ENCODE measurements at regions of chr19 and their contacts with region 1.

Region 1: GRCh38 chr19:35044317-35045117 is 3.0 kb downstream of the HPN start:
- DNase-seq: peak; percentile 39 to 75 (median 65)
- ATAC-seq: peak; percentile 30
- H3K4me3 ChIP-seq: no peak overlapping the region
- H3K4me3 Mint-ChIP-seq: no peak overlapping the region
- H3K27ac ChIP-seq: no peak overlapping the region
- H3K27ac Mint-ChIP-seq: no peak overlapping the region
- H3K4me1 ChIP-seq: peaks cover 28% of the 10 kb centered on the region
- H3K4me1 Mint-ChIP-seq: peaks cover 33% of the 10 kb centered on the region
- H3K27me3 ChIP-seq: peaks cover 0 to 9% of the 10 kb centered on the region in 2 experiments
- H3K27me3 Mint-ChIP-seq: no peaks in the 10 kb centered on the region
- CTCF ChIP-seq: peak; percentile 98

Region 2: DNA sequence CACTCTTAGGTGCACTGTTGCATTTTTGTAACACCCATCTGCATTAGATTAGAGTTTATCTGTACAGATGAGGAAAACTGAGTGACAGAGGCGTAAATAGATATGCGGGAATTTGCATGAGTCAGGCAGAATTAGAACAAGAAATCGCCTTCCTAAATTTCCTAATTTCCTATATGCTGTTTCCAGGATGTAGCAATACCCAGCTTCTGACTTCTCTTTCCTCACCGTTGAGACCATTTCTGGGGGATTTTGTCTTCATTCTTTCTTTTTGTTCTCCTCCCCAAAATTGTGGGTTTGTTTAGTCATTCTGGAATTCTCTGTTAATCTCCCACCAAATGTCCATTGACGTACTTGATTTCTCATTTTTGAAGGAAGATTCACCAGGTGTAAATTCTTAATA is 69.9 kb before region 1 on chr19:
- CTCF ChIA-PET with region 1: interaction called, 42 read pairs
- POLR2A ChIA-PET with region 1: no interaction called
- intact Hi-C with region 1: loop called (anchors 1 kb)
- DNase-seq: peak in 1 of 9 experiments; percentile 20
- ATAC-seq: no peak
- H3K4me3 ChIP-seq: no peak overlapping the region
- H3K4me3 Mint-ChIP-seq: no peak overlapping the region
- H3K27ac ChIP-seq: no peak overlapping the region
- H3K27ac Mint-ChIP-seq: peak overlapping the region; percentile 89
- H3K4me1 ChIP-seq: peaks cover 25% of the 10 kb centered on the region
- H3K4me1 Mint-ChIP-seq: peaks cover 29% of the 10 kb centered on the region
- H3K27me3 ChIP-seq: no peaks in the 10 kb centered on the region
- H3K27me3 Mint-ChIP-seq: no peaks in the 10 kb centered on the region
- CTCF ChIP-seq: no peak

Region 3: GRCh38 chr19:34999498-35000341 is 44.8 kb before region 1 on chr19 and contains the start of gene GRAMD1A:
- CTCF ChIA-PET with region 1: interaction called, 3 read pairs
- POLR2A ChIA-PET with region 1: no interaction called
- intact Hi-C with region 1: loop called in 1 of 2 experiments (anchors 1 kb)
- DNase-seq: peak; percentile 33 to 85 (median 70)
- ATAC-seq: peak; percentile 37
- H3K4me3 ChIP-seq: peak within 1 kb of the TSS; percentile 64 to 71
- H3K4me3 Mint-ChIP-seq: peak within 1 kb of the TSS; percentile 97
- H3K27ac ChIP-seq: peak within 1 kb of the TSS; percentile 86 to 89
- H3K27ac Mint-ChIP-seq: peak within 1 kb of the TSS; percentile 98
- H3K4me1 ChIP-seq: peaks cover 79% of the 10 kb centered on the region
- H3K4me1 Mint-ChIP-seq: peaks cover 64% of the 10 kb centered on the region
- H3K27me3 ChIP-seq: no peaks in the 10 kb centered on the region
- H3K27me3 Mint-ChIP-seq: no peaks in the 10 kb centered on the region
- CTCF ChIP-seq: no peak
- total RNA-seq, gene GRAMD1A: 207 to 221 TPM

Region 4: GRCh38 chr19:35033067-35034004 is 11.2 kb before region 1 on chr19:
- CTCF ChIA-PET with region 1: interaction called, 20 read pairs
- POLR2A ChIA-PET with region 1: no interaction called
- intact Hi-C with region 1: no loop called
- DNase-seq: no peak
- ATAC-seq: no peak
- H3K4me3 ChIP-seq: no peak overlapping the region
- H3K4me3 Mint-ChIP-seq: no peak overlapping the region
- H3K27ac ChIP-seq: no peak overlapping the region
- H3K27ac Mint-ChIP-seq: no peak overlapping the region
- H3K4me1 ChIP-seq: peaks cover 10% of the 10 kb centered on the region
- H3K4me1 Mint-ChIP-seq: peaks cover 13% of the 10 kb centered on the region
- H3K27me3 ChIP-seq: peaks cover 3 to 14% of the 10 kb centered on the region in 2 experiments
- H3K27me3 Mint-ChIP-seq: peaks cover 7% of the 10 kb centered on the region
- CTCF ChIP-seq: no peak

Region 5: DNA sequence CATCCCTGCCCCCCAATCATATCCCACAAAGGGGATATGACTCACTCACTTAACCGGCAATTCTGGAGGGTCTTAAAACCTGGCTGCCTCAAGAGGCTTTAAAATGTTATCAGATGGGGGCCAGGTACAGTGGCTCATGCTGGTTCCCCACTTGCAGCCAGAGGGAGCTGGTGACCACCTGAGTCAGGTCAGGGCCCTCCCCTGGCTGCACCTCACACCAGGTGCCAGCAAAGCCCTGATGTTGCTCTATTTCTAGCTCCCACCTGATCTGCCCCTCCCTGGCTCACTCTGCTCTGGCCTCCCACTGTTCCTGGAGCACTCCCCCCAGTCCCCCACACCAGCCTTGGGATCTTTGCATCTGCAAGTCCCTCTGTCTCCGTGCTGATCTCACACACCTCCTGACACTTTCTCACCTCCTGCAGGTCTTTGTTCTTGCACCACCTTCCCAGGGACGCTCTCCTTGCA is 11.2 kb after region 1 on chr19:
- CTCF ChIA-PET with region 1: interaction called, 19 read pairs
- POLR2A ChIA-PET with region 1: no interaction called
- intact Hi-C with region 1: no loop called
- DNase-seq: peak in 3 of 9 experiments; percentile 23 to 41 (median 38)
- ATAC-seq: peak; percentile 72
- H3K4me3 ChIP-seq: no peak overlapping the region
- H3K4me3 Mint-ChIP-seq: no peak overlapping the region
- H3K27ac ChIP-seq: no peak overlapping the region
- H3K27ac Mint-ChIP-seq: no peak overlapping the region
- H3K4me1 ChIP-seq: no peaks in the 10 kb centered on the region
- H3K4me1 Mint-ChIP-seq: no peaks in the 10 kb centered on the region
- H3K27me3 ChIP-seq: no peaks in the 10 kb centered on the region
- H3K27me3 Mint-ChIP-seq: no peaks in the 10 kb centered on the region
- CTCF ChIP-seq: peak; percentile 24

Region 6: DNA sequence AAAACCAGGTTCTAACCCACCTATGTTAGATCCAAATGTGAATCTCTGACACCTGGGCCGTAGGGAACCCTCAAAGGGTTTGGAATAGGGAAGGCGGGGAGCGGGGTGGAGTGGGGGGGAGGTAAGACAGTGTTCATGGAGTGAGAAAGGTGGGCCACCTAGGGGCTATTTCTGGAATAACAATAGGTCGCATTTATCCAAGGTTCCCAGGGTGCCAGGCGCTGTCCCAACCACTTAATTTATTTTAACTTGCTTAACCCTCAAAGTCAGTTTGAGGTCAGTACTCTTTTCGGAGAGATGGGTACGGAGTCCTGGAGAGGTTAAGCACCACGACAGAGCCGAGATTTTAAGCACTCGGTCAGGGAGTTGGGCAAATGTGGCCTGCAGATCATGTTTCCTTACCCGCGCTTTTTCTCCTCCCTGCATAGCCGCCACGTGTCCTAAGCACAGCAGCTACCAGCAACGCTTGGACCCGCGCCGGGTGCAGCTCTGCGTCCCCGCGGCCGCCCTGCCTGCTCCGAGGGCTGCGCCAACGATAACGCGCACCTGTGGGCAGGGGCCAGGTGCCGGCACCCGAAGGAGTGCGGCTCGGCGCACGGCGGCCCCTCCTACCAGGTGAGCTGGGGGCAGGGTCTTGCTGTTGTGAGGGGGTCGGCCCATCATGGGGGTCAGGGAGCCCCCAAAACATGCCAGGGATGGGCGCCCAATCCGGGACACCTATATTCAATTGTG is 46.2 kb after region 1 on chr19:
- CTCF ChIA-PET with region 1: interaction called, 5 read pairs
- POLR2A ChIA-PET with region 1: interaction called, 3 read pairs
- intact Hi-C with region 1: loop called in 1 of 2 experiments (anchors 2 kb)
- DNase-seq: peak in 7 of 9 experiments; percentile 4 to 72 (median 43)
- ATAC-seq: peak; percentile 84
- H3K4me3 ChIP-seq: no peak overlapping the region
- H3K4me3 Mint-ChIP-seq: no peak overlapping the region
- H3K27ac ChIP-seq: no peak overlapping the region
- H3K27ac Mint-ChIP-seq: no peak overlapping the region
- H3K4me1 ChIP-seq: peaks cover 16% of the 10 kb centered on the region
- H3K4me1 Mint-ChIP-seq: peaks cover 14% of the 10 kb centered on the region
- H3K27me3 ChIP-seq: peaks cover 0 to 2% of the 10 kb centered on the region in 2 experiments
- H3K27me3 Mint-ChIP-seq: peaks cover 4% of the 10 kb centered on the region
- CTCF ChIP-seq: peak; percentile 65